ENCODE measurements at regions of chr10 and their contacts with region 1.

Region 1: DNA sequence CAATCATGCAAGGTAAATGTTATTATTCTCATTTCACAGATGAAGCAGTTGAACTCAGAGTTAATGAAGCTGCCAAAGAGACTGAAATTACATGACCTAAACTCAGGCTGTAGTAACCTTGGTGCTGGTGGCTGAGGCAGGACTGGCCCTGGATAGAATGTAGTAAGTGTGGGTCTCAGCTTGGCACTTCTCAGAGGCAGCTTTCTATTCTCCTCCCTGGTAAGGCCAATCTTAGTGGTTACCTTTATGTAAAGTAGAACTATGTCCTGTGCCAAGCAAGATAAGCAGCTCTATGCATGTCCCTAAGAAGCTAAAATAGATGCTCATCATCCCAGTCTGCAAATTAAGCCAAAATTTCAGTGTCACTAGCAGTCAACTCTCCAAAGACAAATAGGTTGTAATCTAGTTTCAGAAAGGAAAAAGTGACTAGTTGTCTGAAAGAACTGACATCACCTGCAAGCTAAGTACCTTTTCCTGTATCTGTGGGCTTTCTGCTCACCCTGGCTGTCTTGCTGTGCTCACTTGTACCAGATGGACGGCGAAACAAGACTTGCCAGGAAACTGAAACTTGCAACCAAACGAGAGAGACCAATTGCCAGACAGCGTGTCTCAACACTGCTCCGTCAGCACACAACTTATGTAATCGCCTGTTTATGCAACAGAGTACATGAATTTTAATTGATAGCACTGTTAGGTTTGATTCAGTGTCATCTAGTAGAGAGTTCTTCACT is 43.7 kb downstream of the CH25H start:
- DNase-seq: peak; percentile 73
- ATAC-seq: peak; percentile 93
- H3K4me3 Mint-ChIP-seq: peak overlapping the region; percentile 38
- H3K27ac Mint-ChIP-seq: peak overlapping the region; percentile 84
- H3K4me1 Mint-ChIP-seq: peaks cover 37% of the 10 kb centered on the region
- H3K27me3 Mint-ChIP-seq: peaks cover 23% of the 10 kb centered on the region

Region 2: DNA sequence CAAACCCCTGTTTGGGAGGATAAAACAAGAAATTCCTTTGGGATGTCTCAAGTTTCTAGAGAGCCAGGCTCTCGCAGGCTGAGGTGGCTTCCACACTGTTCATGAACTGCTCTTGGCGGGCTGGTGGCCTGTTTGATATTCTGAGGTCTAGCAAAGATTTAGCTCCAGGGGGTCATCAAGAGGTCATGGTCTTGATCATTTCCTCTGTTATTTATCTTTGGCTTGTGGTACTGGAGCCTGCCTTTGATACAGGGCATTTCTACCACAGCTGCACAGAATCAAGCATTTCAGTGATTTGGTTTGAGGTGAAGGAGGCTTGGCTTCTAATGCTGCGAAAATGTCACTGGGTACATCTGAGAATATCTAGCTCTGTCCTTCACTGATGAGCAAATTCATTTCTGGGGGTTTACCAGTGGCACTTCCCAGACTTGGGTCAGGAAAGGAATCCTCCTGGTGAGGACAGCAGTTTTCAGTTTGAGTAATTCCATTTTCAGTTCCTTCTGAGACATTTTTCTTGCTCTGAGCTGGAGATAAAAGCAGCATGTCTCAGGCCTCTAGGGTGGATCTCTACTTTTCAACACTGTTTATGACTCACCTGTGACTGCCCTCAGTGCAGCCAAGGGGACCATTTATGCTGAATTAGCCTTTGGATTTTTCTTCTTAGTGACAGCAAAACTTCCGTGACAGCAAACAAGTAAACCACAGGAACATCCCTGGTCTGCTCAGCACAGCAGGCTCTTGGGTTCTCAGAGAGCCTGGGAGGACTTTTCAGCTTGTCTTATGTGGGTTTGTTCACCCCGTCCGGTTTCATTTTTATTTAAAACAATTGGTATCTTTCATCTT is 892.3 kb before region 1 on chr10:
- CTCF ChIA-PET with region 1: no interaction called
- POLR2A ChIA-PET with region 1: no interaction called
- intact Hi-C with region 1: loop called in 1 of 2 experiments (anchors 10 kb)
- DNase-seq: peak; percentile 65
- ATAC-seq: peak; percentile 93
- H3K4me3 Mint-ChIP-seq: no peak overlapping the region
- H3K27ac Mint-ChIP-seq: peak overlapping the region; percentile 64
- H3K4me1 Mint-ChIP-seq: peaks cover 37% of the 10 kb centered on the region
- H3K27me3 Mint-ChIP-seq: peaks cover 3% of the 10 kb centered on the region

Region 3: GRCh38 chr10:88996927-88997326 is 166.5 kb before region 1 on chr10:
- CTCF ChIA-PET with region 1: no interaction called
- POLR2A ChIA-PET with region 1: no interaction called
- intact Hi-C with region 1: loop called (anchors 2 to 5 kb)
- DNase-seq: no peak
- ATAC-seq: no peak
- H3K4me3 Mint-ChIP-seq: no peak overlapping the region
- H3K27ac Mint-ChIP-seq: no peak overlapping the region
- H3K4me1 Mint-ChIP-seq: peaks cover 67% of the 10 kb centered on the region
- H3K27me3 Mint-ChIP-seq: no peaks in the 10 kb centered on the region

Region 4: GRCh38 chr10:89086801-89087521 is 76.5 kb before region 1 on chr10:
- CTCF ChIA-PET with region 1: interaction called, 3 read pairs
- POLR2A ChIA-PET with region 1: no interaction called
- intact Hi-C with region 1: loop called (anchors 1 kb)
- DNase-seq: peak; percentile 53
- ATAC-seq: peak; percentile 55
- H3K4me3 Mint-ChIP-seq: peak overlapping the region; percentile 11
- H3K27ac Mint-ChIP-seq: peak overlapping the region; percentile 78
- H3K4me1 Mint-ChIP-seq: peaks cover 11% of the 10 kb centered on the region
- H3K27me3 Mint-ChIP-seq: peaks cover under 1% of the 10 kb centered on the region

Region 5: GRCh38 chr10:89207181-89207800 is 43.9 kb after region 1 on chr10 and contains the start of gene CH25H:
- CTCF ChIA-PET with region 1: interaction called, 6 read pairs
- POLR2A ChIA-PET with region 1: no interaction called
- intact Hi-C with region 1: loop called in 1 of 2 experiments (anchors 5 kb)
- DNase-seq: peak; percentile 76
- ATAC-seq: peak; percentile 76
- H3K4me3 Mint-ChIP-seq: peak within 1 kb of the TSS; percentile 69
- H3K27ac Mint-ChIP-seq: no peak within 1 kb of the TSS
- H3K4me1 Mint-ChIP-seq: peaks cover 10% of the 10 kb centered on the region
- H3K27me3 Mint-ChIP-seq: peaks cover 35% of the 10 kb centered on the region
- total RNA-seq, gene CH25H: not detected

Region 6: GRCh38 chr10:89217057-89217990 is 53.9 kb after region 1 on chr10:
- CTCF ChIA-PET with region 1: interaction called, 13 read pairs
- POLR2A ChIA-PET with region 1: no interaction called
- intact Hi-C with region 1: no loop called
- DNase-seq: peak; percentile 76
- ATAC-seq: peak; percentile 55
- H3K4me3 Mint-ChIP-seq: no peak overlapping the region
- H3K27ac Mint-ChIP-seq: no peak overlapping the region
- H3K4me1 Mint-ChIP-seq: peaks cover 9% of the 10 kb centered on the region
- H3K27me3 Mint-ChIP-seq: no peaks in the 10 kb centered on the region

Region 7: DNA sequence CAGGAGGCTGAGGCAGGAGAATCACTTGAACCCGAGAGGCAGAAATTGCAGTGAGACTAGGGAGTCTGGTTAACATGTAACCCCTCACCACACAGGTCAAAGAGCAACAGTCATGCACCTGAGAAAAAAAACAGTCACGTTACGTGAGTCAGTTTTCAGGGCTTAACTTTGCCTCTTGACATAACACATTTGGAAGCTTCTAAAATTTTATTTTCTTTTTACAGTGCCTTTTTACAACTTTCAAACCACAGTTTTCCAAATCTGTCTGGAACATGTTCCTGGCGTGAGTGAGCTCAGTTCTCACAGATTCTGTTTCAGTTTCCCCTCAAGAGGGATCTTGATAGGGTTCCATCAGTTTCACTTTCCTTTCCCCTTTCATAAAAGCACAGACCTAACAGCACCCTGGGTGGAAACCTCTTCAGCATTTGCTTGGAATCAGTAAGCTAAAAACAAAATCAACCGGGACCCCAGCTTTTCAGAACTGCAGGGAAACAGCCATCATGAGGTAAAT is 168.7 kb after region 1 on chr10:
- CTCF ChIA-PET with region 1: no interaction called
- POLR2A ChIA-PET with region 1: no interaction called
- intact Hi-C with region 1: loop called in 1 of 2 experiments (anchors 1 kb)
- DNase-seq: peak; percentile 41
- ATAC-seq: peak; percentile 54
- H3K4me3 Mint-ChIP-seq: peak overlapping the region; percentile 62
- H3K27ac Mint-ChIP-seq: peak overlapping the region; percentile 63
- H3K4me1 Mint-ChIP-seq: peaks cover 79% of the 10 kb centered on the region
- H3K27me3 Mint-ChIP-seq: peaks cover 8% of the 10 kb centered on the region

Region 8: DNA sequence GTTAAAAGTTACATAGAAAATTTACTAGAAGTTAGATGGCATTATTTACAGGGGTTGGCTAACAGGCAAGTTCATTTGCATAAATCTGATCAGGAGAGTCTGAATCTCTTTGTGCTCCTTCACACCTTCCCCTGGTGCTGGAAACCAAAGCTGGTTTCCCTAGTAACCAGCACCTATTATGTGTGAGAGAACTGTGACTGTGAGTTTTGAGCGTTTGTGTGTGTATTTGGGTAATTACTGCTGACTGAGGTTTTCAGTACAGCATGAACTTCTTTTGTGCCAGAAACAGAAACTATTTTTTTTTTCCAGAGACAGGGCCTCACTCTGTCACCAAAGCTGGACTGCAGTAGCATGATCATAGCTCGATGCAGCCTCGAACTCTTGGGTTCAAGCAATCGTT is 204.1 kb after region 1 on chr10:
- CTCF ChIA-PET with region 1: no interaction called
- POLR2A ChIA-PET with region 1: no interaction called
- intact Hi-C with region 1: no loop called
- DNase-seq: peak; percentile 14
- ATAC-seq: peak; percentile 75
- H3K4me3 Mint-ChIP-seq: no peak overlapping the region
- H3K27ac Mint-ChIP-seq: no peak overlapping the region
- H3K4me1 Mint-ChIP-seq: peaks cover 29% of the 10 kb centered on the region
- H3K27me3 Mint-ChIP-seq: peaks cover 2% of the 10 kb centered on the region

Region 9: GRCh38 chr10:89701238-89702120 is 538.0 kb after region 1 on chr10 and contains the start of gene KIF20B:
- CTCF ChIA-PET with region 1: no interaction called
- POLR2A ChIA-PET with region 1: no interaction called
- intact Hi-C with region 1: no loop called
- DNase-seq: peak; percentile 97
- ATAC-seq: peak; percentile 97
- H3K4me3 Mint-ChIP-seq: peak within 1 kb of the TSS; percentile 99
- H3K27ac Mint-ChIP-seq: peak within 1 kb of the TSS; percentile 98
- H3K4me1 Mint-ChIP-seq: peaks cover 41% of the 10 kb centered on the region
- H3K27me3 Mint-ChIP-seq: no peaks in the 10 kb centered on the region
- total RNA-seq, gene KIF20B: 74.6 to 86.2 TPM